Heart right ventricle (tissue), 16 donors: ENCODE measurements at regions of chr5 and their contacts with region 1.

Region 1: GRCh38 chr5:36389245-36389644 is 87.5 kb upstream of the RANBP3L start:
- DNase-seq: peak in 1 of 2 donors; percentile 51
- ATAC-seq: peak in 7 of 8 donors; percentile 51 to 85 (median 75)
- H3K4me3 ChIP-seq: no peak overlapping the region
- H3K27ac ChIP-seq: peak overlapping the region in 2 of 10 donors; percentile 0 to 46
- H3K4me1 ChIP-seq: peaks cover 0 to 19% (median 0%) of the 10 kb centered on the region in 9 donors
- H3K27me3 ChIP-seq: peaks cover 0 to 13% (median 0%) of the 10 kb centered on the region in 7 donors
- CTCF ChIP-seq: no peak

Region 2: GRCh38 chr5:36158144-36158543 is 231.1 kb before region 1 on chr5:
- intact Hi-C with region 1: no loop called
- DNase-seq: no peak
- ATAC-seq: peak in 2 of 8 donors; percentile 11 to 16
- H3K4me3 ChIP-seq: no peak overlapping the region
- H3K27ac ChIP-seq: no peak overlapping the region
- H3K4me1 ChIP-seq: peaks cover 0 to 31% (median 21%) of the 10 kb centered on the region in 9 donors
- H3K27me3 ChIP-seq: no peaks in the 10 kb centered on the region
- CTCF ChIP-seq: no peak

Region 3: DNA sequence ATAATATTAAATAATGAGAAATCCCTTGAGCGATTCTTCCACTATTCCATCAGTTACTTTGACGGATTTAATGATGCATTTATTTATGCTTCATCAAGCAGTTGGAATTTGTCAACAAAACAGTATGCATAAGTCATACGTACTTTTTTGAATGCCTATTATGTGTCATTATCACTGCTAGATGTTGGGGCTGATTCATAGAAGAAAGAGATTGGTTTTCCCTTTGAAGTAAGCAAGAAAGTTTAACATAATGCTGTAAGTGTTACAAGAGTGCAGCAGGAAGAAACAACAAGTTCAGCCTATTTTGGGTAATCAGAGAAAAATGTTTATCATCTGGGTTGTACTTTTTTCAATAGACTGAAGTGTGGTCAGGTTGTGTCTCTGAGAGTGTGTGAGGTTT is 33.7 kb after region 1 on chr5:
- intact Hi-C with region 1: no loop called
- DNase-seq: no peak
- ATAC-seq: no peak
- H3K4me3 ChIP-seq: no peak overlapping the region
- H3K27ac ChIP-seq: no peak overlapping the region
- H3K4me1 ChIP-seq: no peaks in the 10 kb centered on the region
- H3K27me3 ChIP-seq: no peaks in the 10 kb centered on the region
- CTCF ChIP-seq: no peak

Region 4: DNA sequence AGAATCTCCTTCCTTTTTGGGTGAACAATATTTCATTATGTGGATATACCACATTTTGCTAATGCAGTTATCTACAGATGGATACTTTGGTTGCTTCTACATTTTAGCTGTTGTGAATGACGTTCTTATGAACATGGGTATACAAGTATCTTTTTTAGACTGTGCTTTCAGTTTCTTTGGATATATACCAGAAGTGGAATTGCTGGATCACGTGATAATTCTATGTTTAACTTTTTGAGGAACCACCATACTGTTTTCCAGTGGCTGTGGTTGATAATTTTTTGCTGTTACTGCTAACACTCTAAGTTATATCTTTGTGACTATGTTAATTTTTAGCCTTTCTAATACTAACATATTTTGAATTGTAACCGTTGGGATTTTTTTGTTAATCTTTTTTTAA is 1002.3 kb after region 1 on chr5:
- intact Hi-C with region 1: loop called in 1 of 10 experiments (anchors 10 kb)
- DNase-seq: no peak
- ATAC-seq: no peak
- H3K4me3 ChIP-seq: no peak overlapping the region
- H3K27ac ChIP-seq: peak overlapping the region in 1 of 10 donors; percentile 31
- H3K4me1 ChIP-seq: peaks cover 0 to 5% (median 0%) of the 10 kb centered on the region in 9 donors
- H3K27me3 ChIP-seq: no peaks in the 10 kb centered on the region
- CTCF ChIP-seq: no peak